ENCODE measurements at regions of chr22 and their contacts with region 1.

Region 1: DNA sequence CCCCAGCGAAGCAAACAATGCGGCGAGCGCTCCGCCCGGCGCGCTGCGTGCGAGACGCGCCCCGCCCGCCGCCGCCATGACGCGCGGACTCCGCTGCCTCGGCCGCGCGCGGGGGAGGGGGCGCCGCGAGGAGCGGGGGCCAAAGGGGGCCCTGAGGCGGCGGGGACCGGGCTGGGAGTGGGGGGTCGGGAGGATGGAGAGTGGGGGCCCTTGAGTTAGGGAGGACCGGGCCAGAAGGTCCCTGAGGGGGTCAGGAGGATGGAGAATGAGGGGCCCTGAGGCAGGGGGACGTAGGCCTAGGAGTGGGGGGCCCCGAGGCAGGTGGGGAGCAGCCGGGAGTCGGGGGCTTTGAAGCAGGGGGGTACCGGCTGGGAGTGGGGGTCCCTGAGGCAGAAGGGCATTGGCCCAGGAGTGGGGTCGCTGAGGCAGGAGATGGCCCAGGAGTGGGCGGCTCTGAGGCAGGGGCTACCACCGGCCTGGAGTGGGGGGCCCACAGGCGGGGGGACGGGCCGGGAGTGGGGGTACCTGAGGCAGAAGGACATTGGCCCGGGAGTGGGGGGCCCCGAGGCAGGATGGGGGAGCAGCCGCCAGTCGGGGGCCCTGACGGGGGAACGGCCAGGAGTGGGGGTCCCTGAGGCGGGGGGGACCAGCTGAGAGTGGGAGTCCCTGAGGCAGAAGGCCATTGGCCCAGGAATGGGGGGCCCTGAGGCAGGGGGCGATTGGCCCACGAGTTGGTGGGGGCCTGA is at the start of gene BRD1:
- DNase-seq: no peak
- H3K4me3 ChIP-seq: peak within 1 kb of the TSS; percentile 76 to 93 (median 88)
- H3K27ac ChIP-seq: peak within 1 kb of the TSS; percentile 91 to 94 (median 93)
- H3K4me1 ChIP-seq: peaks cover 27 to 48% (median 43%) of the 10 kb centered on the region in 4 donors
- H3K27me3 ChIP-seq: no peaks in the 10 kb centered on the region
- CTCF ChIP-seq: no peak
- EP300 ChIP-seq: no peak
- POLR2A ChIP-seq: no peak
- total RNA-seq, gene BRD1: 36.5 to 54.1 (median 51.4) TPM

Region 2: GRCh38 chr22:49852898-49853894 is 25.2 kb after region 1 on chr22 and contains the start of gene ZBED4:
- intact Hi-C with region 1: loop called (anchors 2 kb)
- DNase-seq: peak; percentile 98
- H3K4me3 ChIP-seq: peak within 1 kb of the TSS; percentile 81 to 84 (median 84)
- H3K27ac ChIP-seq: peak within 1 kb of the TSS; percentile 91 to 95 (median 92)
- H3K4me1 ChIP-seq: peaks cover 37 to 52% (median 51%) of the 10 kb centered on the region in 4 donors
- H3K27me3 ChIP-seq: peaks cover 13 to 27% (median 24%) of the 10 kb centered on the region in 4 donors
- CTCF ChIP-seq: no peak
- EP300 ChIP-seq: no peak
- POLR2A ChIP-seq: peak; percentile 50
- total RNA-seq, gene ZBED4: 6.6 to 11.1 (median 9.5) TPM